ENCODE measurements at regions of chr19 and their contacts with region 1.

Region 1: DNA sequence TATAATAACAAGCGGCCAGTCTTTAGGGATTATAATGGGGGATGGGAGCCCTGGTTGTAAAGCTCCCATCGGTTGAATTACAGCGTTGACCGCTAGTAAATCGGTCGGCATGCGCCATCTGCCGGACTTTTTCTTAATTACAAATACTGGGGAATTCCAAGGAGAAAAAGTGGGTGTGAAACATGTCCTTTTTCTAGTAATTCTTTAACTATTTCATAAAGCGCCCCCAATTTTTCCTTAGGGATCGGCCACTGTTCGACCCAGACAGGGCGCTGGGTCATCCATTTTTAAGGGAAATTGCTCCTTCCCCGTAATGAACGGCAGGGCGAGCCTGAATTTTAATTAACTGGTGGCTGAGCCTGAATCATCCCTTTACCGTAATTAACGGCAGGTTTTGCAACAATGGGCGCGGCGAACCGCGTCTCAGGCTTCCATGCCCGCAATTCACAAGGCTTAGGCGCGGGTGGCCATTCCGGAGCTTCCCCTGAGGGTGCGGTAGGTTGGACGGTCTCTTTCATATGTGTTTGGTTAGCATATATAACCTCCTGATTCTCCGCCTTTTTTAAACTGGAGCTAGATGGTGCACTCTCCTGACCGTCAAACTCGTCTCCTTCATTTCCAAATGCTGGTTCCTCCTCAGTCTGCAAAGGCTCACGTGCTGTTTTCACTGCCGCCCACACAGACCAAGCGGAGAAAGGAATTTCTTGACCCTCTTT is 30.2 kb upstream of the EVI5L start:
- DNase-seq: peak; percentile 17 to 81 (median 48)
- ATAC-seq: no peak
- H3K4me3 ChIP-seq: no peak overlapping the region
- H3K4me3 Mint-ChIP-seq: no peak overlapping the region
- H3K27ac ChIP-seq: no peak overlapping the region
- H3K27ac Mint-ChIP-seq: no peak overlapping the region
- H3K4me1 ChIP-seq: peaks cover 9% of the 10 kb centered on the region
- H3K4me1 Mint-ChIP-seq: peaks cover 6% of the 10 kb centered on the region
- H3K27me3 ChIP-seq: peaks cover 7 to 10% of the 10 kb centered on the region in 2 experiments
- H3K27me3 Mint-ChIP-seq: peaks cover 33% of the 10 kb centered on the region
- CTCF ChIP-seq: peak; percentile 76

Region 2: DNA sequence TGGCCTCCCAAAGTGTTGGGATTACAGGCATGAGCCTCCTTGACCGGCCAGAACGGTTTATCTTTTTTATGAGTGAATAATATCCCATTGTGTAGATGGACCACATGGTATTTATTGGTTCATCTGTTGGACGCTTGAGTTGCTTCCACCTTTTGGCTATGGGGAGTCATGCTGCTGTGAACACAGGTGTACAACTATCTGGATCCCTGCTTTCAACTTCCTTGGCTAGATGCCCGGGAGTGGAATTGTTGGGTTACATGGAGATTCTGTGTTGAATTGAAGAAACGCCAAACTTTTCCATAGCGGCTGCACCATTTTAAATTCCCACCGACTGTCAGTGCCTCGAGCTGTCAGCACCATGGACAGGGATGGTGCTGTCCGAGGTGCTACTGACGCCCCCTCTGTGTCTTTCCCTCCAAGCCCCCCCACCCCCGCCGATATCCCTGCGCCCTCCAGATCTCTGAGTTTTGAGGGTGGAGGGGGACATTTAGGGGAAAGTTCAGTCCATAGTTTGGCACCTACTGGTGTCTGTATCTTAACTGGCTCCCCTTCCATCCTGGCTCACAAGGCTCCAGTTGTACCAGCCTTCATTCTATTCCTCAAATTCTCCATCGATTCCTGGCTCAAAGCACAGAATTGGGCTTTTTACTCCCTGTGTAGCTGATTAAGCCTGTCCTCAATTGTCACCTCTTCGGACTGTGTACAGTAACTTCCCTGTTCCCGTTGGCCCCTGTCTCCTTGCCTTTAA is 237.0 kb before region 1 on chr19:
- CTCF ChIA-PET with region 1: interaction called, 48 read pairs
- POLR2A ChIA-PET with region 1: interaction called, 5 read pairs
- intact Hi-C with region 1: loop called (anchors 1 kb)
- DNase-seq: peak in 2 of 14 experiments; percentile 31 to 35
- ATAC-seq: no peak
- H3K4me3 ChIP-seq: no peak overlapping the region
- H3K4me3 Mint-ChIP-seq: no peak overlapping the region
- H3K27ac ChIP-seq: no peak overlapping the region
- H3K27ac Mint-ChIP-seq: no peak overlapping the region
- H3K4me1 ChIP-seq: no peaks in the 10 kb centered on the region
- H3K4me1 Mint-ChIP-seq: no peaks in the 10 kb centered on the region
- H3K27me3 ChIP-seq: no peaks in the 10 kb centered on the region
- H3K27me3 Mint-ChIP-seq: no peaks in the 10 kb centered on the region
- CTCF ChIP-seq: no peak

Region 3: DNA sequence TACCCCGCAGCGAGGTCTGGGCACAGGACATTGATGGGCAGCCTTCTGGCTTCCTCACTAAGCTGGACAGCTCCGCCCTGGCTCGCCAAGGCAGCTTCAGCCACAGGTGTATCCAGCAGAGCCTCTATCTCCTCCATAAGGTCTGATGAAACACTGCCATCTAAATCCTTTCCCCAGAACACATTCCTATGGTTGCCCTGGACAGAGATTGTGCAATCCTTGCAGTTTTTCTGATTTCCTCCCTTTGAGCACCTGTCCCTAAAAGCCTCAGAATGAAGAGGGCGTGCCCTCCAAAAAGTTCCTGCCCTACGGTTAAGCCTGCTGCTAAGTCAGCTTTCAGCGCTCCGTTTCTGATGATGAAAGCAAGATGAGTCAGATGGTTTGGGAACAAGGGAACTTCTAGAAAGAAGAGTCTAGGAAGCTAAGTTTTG is 15.8 kb before region 1 on chr19:
- CTCF ChIA-PET with region 1: no interaction called
- POLR2A ChIA-PET with region 1: no interaction called
- intact Hi-C with region 1: no loop called
- DNase-seq: peak in 2 of 14 experiments; percentile 46 to 52
- ATAC-seq: no peak
- H3K4me3 ChIP-seq: no peak overlapping the region
- H3K4me3 Mint-ChIP-seq: no peak overlapping the region
- H3K27ac ChIP-seq: no peak overlapping the region
- H3K27ac Mint-ChIP-seq: no peak overlapping the region
- H3K4me1 ChIP-seq: peaks cover 12% of the 10 kb centered on the region
- H3K4me1 Mint-ChIP-seq: no peaks in the 10 kb centered on the region
- H3K27me3 ChIP-seq: peaks cover 18 to 30% of the 10 kb centered on the region in 2 experiments
- H3K27me3 Mint-ChIP-seq: peaks cover 42% of the 10 kb centered on the region
- CTCF ChIP-seq: no peak